Sigmoid colon (tissue), 7 donors: ENCODE measurements at regions of chr16 and their contacts with region 1.

Region 1: GRCh38 chr16:77971306-77972271 is 50.8 kb upstream of the CLEC3A start:
- DNase-seq: peak; percentile 83
- H3K4me3 ChIP-seq: no peak overlapping the region
- H3K27ac ChIP-seq: no peak overlapping the region
- H3K4me1 ChIP-seq: no peaks in the 10 kb centered on the region
- H3K27me3 ChIP-seq: no peaks in the 10 kb centered on the region
- CTCF ChIP-seq: peak; percentile 66 to 73 (median 70)
- EP300 ChIP-seq: no peak
- POLR2A ChIP-seq: no peak

Region 2: DNA sequence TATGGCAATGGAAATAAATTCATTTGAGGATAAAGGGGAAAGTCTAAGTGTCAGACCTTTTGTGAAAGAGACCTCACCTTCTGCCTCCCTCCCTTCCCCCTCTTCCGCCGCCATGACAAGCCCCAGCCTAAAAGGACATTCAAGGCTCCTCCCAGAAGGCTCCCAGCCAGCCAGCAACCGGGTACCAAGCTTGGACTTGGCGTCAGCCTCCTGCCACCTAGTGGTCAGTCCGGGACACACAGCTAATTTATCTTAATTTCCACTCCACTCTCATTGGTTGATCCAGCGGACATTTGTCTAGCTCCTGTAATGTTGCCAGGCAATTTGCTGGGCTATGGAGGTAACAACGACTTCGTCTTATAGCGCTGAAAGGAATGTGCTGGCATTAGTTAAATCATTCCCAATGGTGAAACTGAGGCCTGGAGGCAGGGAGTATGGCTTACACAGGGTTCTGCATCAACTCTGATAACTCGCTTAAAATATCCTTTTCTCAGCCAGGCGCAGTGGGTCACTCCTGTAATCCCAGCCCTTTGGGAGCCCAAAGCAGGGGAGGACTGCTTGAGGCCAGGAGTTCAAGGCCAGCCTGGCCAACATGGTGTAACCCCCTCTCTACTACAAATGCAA is 31.4 kb after region 1 on chr16:
- intact Hi-C with region 1: loop called (anchors 1 kb)
- DNase-seq: peak; percentile 93
- H3K4me3 ChIP-seq: no peak overlapping the region
- H3K27ac ChIP-seq: no peak overlapping the region
- H3K4me1 ChIP-seq: peaks cover 0 to 8% (median 2%) of the 10 kb centered on the region in 4 donors
- H3K27me3 ChIP-seq: no peaks in the 10 kb centered on the region
- CTCF ChIP-seq: peak; percentile 62 to 84 (median 72)
- EP300 ChIP-seq: no peak
- POLR2A ChIP-seq: no peak